Esophagus muscularis mucosa (tissue), 4 donors: ENCODE measurements at regions of chr15 and their contacts with region 1.

Region 1: DNA sequence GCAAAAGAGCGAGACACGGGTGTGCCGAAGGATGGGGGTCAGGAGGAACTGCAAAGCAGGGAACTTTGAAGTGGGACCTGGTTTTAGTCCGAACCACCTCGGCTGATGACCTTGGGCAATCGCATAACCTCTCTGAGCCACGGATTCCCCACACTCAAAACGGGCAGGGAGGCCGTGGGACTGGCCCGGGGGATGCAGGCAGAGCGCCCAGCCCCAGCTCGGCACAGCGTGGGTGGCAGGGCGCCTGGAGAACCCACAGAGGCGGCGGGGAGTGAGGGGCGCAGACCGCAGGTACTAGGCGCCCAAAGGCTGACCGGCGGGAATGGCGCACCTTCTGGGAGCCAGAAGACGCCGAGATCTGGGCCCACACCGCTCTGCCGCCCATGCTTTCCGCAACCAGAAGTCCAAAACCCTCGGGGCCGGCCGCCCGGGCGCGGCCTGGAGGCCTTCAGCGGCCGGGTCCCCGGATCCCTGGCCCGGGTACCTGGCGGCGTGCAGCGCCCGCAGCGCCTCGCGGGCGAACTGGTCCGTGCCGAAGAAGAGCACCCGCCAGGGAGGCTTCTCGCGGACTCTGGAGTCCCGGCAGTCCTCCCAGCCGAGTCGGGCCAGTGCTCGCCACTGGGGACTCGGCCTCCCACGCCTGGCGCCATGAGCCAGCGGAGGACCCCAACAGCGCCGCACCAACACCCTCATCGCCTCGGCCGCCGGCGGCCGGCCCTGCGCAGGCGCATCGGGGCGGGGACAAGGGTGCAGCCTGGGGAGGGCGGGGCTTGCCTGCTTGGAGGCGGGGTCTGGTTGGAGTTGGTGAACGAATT is at the start of gene MTFMT:
- DNase-seq: peak; percentile 97
- H3K4me3 ChIP-seq: peak within 1 kb of the TSS; percentile 77 to 98 (median 89)
- H3K27ac ChIP-seq: peak within 1 kb of the TSS; percentile 75 to 89 (median 82)
- H3K4me1 ChIP-seq: peaks cover 18 to 40% (median 30%) of the 10 kb centered on the region in 4 donors
- H3K27me3 ChIP-seq: no peaks in the 10 kb centered on the region
- CTCF ChIP-seq: peak in 2 of 3 experiments; percentile 17 to 22
- EP300 ChIP-seq: no peak
- POLR2A ChIP-seq: peak; percentile 94
- total RNA-seq, gene MTFMT: 26.3 to 29.9 (median 29.4) TPM

Region 2: DNA sequence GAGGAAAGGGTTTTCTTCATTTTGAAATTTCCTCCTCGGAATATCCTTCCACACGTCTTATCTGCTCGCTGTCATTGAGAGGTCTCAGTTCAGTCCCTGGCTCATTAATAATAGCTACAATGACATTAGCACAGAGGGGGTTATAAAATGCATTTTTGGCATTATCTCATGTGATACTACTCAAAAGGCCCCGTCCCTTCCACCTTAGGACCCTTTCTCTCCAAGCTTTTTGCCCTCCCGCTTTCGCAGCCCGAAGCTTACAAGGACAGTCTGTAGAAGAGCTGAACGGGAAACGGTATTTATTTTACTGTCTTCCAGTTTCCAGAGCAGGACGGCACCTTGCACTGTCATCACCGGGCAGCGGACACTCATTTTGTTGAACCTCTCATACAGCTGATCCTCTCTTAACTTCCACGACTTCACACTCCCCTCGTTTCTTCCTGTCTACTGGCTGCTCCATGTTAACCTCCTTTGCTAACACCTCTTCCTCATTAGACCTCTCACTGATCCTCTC is 193.0 kb before region 1 on chr15:
- intact Hi-C with region 1: no loop called
- DNase-seq: no peak
- H3K4me3 ChIP-seq: peak overlapping the region; percentile 31 to 46 (median 39)
- H3K27ac ChIP-seq: peak overlapping the region; percentile 73 to 85 (median 84)
- H3K4me1 ChIP-seq: peaks cover 15 to 28% (median 24%) of the 10 kb centered on the region in 4 donors
- H3K27me3 ChIP-seq: no peaks in the 10 kb centered on the region
- CTCF ChIP-seq: no peak
- EP300 ChIP-seq: no peak
- POLR2A ChIP-seq: no peak

Region 3: DNA sequence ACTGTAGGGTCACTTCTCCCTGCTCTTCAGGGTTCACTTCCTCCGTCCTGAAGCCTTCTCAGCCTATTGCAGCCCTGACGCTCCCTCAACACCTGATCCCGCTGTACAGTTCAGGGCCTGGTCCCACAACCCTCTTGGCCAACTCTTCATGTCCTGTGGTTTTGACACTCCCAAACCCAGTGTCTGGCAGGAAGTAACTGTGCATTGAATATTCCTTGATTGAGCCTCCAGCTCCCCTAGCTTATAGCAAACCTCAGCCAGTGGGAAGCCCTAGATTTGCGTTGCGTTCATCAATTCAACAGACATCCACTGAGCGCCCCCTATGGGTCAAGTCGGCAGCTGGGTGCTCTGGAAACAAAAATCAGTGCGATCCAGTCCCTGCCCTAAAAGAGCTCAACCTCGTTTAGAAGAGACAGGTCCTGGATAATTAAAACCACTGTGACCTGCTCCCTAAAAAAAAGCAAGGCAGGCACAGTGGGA is 72.3 kb after region 1 on chr15:
- intact Hi-C with region 1: loop called (anchors 1 kb)
- DNase-seq: no peak
- H3K4me3 ChIP-seq: no peak overlapping the region
- H3K27ac ChIP-seq: peak overlapping the region in 2 of 4 donors; percentile 16 to 23
- H3K4me1 ChIP-seq: peaks cover 0 to 27% (median 27%) of the 10 kb centered on the region in 4 donors
- H3K27me3 ChIP-seq: no peaks in the 10 kb centered on the region
- CTCF ChIP-seq: peak; percentile 79 to 89 (median 88)
- EP300 ChIP-seq: no peak
- POLR2A ChIP-seq: no peak

Region 4: GRCh38 chr15:66097151-66098021 is 1068.3 kb after region 1 on chr15:
- intact Hi-C with region 1: no loop called
- DNase-seq: no peak
- H3K4me3 ChIP-seq: no peak overlapping the region
- H3K27ac ChIP-seq: no peak overlapping the region
- H3K4me1 ChIP-seq: no peaks in the 10 kb centered on the region
- H3K27me3 ChIP-seq: peaks cover 0 to 27% (median 0%) of the 10 kb centered on the region in 4 donors
- CTCF ChIP-seq: no peak
- EP300 ChIP-seq: no peak
- POLR2A ChIP-seq: no peak